Activated CD4-positive, alpha-beta memory T cell treated with anti-CD3 and anti-CD28 coated beads, Interleukin-2, amount 10 ng/mL, durations not matched to agents 7 days and 5 days (primary cell): ENCODE measurements at regions of chr5 and their contacts with region 1.

Region 1: GRCh38 chr5:157180374-157181264 is at the start of gene ITK:
- DNase-seq: peak; percentile 67
- H3K4me3 Mint-ChIP-seq: peak within 1 kb of the TSS; percentile 94
- H3K27ac Mint-ChIP-seq: peak within 1 kb of the TSS; percentile 99
- H3K4me1 Mint-ChIP-seq: peaks cover 49% of the 10 kb centered on the region
- H3K27me3 Mint-ChIP-seq: no peaks in the 10 kb centered on the region
- total RNA-seq, gene ITK: 247 to 249 TPM

Region 2: DNA sequence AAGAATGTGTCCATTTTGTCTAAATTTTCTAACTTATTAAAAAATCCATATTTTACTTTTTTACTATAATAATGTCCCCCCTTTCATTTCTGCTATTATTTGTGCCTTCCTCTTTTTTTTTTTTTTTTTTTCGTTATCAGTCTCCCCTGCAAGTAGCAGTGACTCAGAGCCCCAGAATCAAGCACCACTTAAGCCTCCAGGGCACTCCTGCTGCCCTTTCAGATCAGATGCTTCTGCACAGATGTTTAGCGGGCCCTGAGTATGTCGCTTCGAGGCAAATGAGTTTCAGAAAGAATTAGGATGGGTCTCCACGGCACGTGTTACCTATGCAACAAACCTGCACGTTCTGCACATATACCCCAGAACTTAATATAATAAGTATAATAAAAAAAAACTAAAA is 49.7 kb before region 1 on chr5:
- CTCF ChIA-PET with region 1: no interaction called
- POLR2A ChIA-PET with region 1: no interaction called
- DNase-seq: no peak
- H3K4me3 Mint-ChIP-seq: no peak overlapping the region
- H3K27ac Mint-ChIP-seq: no peak overlapping the region
- H3K4me1 Mint-ChIP-seq: peaks cover 26% of the 10 kb centered on the region
- H3K27me3 Mint-ChIP-seq: peaks cover 2% of the 10 kb centered on the region

Region 3: GRCh38 chr5:157204765-157205164 is 24.1 kb after region 1 on chr5:
- CTCF ChIA-PET with region 1: interaction called, 3 read pairs
- POLR2A ChIA-PET with region 1: interaction called, 284 read pairs
- DNase-seq: no peak
- H3K4me3 Mint-ChIP-seq: no peak overlapping the region
- H3K27ac Mint-ChIP-seq: peak overlapping the region; percentile 68
- H3K4me1 Mint-ChIP-seq: peaks cover 87% of the 10 kb centered on the region
- H3K27me3 Mint-ChIP-seq: no peaks in the 10 kb centered on the region